HepG2 (cell line): ENCODE measurements at regions of chr21 and their contacts with region 1.

Region 1: GRCh38 chr21:43728467-43729390 is 9.8 kb downstream of the PDXK start:
- DNase-seq: peak; percentile 85
- ATAC-seq: peak; percentile 73
- H3K4me3 ChIP-seq: peak overlapping the region; percentile 75 to 96 (median 82)
- H3K27ac ChIP-seq: peak overlapping the region; percentile 93
- H3K4me1 ChIP-seq: peaks cover 69% of the 10 kb centered on the region
- H3K27me3 ChIP-seq: no peaks in the 10 kb centered on the region; a peak in 1 of 5 replicates
- CTCF ChIP-seq: peak; percentile 50
- EP300 ChIP-seq: no peak; a peak in 1 of 4 replicates
- POLR2A ChIP-seq: peak in 1 of 2 experiments; percentile 75; a peak in 2 of 4 replicates
- RAD21 ChIP-seq: peak; percentile 51

Region 2: DNA sequence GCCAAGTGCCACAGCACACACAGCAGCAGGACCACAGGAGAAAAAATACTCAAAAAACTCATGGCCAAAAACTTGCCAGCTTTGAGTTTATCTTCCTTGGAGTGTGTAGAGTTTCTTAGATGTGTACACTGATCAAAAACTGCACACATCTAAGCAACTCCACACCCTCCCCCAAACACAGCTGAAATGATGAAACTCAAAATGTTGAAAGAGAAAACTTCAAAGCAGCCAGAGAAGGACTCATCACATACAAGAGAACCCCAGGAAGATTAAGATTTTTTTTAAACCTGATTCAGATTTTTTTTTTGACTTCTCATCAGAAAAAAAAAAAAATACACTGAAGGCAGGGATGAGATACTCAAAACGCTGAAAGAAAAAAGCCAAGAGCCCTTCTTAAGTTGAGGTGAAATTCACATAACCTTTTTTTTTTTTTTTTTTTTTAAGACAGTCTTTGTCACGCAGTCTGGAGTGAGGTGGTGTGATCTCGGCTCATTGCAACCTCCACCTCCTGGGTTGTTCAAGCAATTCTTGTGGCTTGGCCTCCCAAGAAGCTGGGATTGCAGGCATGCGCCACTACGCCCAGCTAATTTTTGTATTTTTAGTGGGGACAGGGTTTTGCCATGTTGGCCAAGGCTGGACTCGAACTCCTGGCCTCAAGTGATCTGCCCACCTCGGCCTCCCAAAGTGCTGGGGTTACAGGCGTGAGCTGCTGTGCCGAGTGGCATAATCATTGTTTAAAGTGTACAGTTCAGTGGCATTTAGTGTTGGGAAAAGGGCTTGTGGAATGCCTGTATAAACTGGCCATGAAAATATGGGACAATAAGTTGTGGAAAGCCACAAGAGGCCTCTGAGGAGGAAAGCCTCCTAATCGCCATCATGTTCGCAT is 30.7 kb before region 1 on chr21:
- CTCF ChIA-PET with region 1: no interaction called
- POLR2A ChIA-PET with region 1: interaction called, 13 read pairs
- in situ Hi-C with region 1: no loop called
- intact Hi-C with region 1: no loop called
- DNase-seq: peak; percentile 57
- ATAC-seq: peak; percentile 26
- H3K4me3 ChIP-seq: peak overlapping the region in 1 of 3 experiments; percentile 28; a peak in 2 of 6 replicates
- H3K27ac ChIP-seq: peak overlapping the region; percentile 69
- H3K4me1 ChIP-seq: peaks cover 65% of the 10 kb centered on the region
- H3K27me3 ChIP-seq: no peaks in the 10 kb centered on the region
- CTCF ChIP-seq: no peak
- EP300 ChIP-seq: no peak
- POLR2A ChIP-seq: no peak
- RAD21 ChIP-seq: no peak

Region 3: GRCh38 chr21:43703035-43703880 is 25.5 kb before region 1 on chr21:
- CTCF ChIA-PET with region 1: no interaction called
- POLR2A ChIA-PET with region 1: interaction called, 13 read pairs
- in situ Hi-C with region 1: no loop called
- intact Hi-C with region 1: no loop called
- DNase-seq: peak; percentile 57
- ATAC-seq: peak; percentile 67
- H3K4me3 ChIP-seq: peak overlapping the region; percentile 40 to 63 (median 55)
- H3K27ac ChIP-seq: peak overlapping the region; percentile 66
- H3K4me1 ChIP-seq: peaks cover 82% of the 10 kb centered on the region
- H3K27me3 ChIP-seq: peaks cover 0 to 2% of the 10 kb centered on the region in 2 experiments; a peak in 2 of 5 replicates
- CTCF ChIP-seq: peak; percentile 33
- EP300 ChIP-seq: no peak
- POLR2A ChIP-seq: peak in 1 of 2 experiments; percentile 35; a peak in 1 of 4 replicates
- RAD21 ChIP-seq: no peak

Region 4: GRCh38 chr21:43712308-43712974 is 16.3 kb before region 1 on chr21:
- CTCF ChIA-PET with region 1: no interaction called
- POLR2A ChIA-PET with region 1: interaction called, 14 read pairs
- in situ Hi-C with region 1: no loop called
- intact Hi-C with region 1: no loop called
- DNase-seq: no peak
- ATAC-seq: peak; percentile 58
- H3K4me3 ChIP-seq: peak overlapping the region; percentile 37 to 65 (median 41)
- H3K27ac ChIP-seq: no peak overlapping the region
- H3K4me1 ChIP-seq: peaks cover 55% of the 10 kb centered on the region
- H3K27me3 ChIP-seq: peaks cover 3 to 11% of the 10 kb centered on the region in 2 experiments; a peak in 4 of 5 replicates
- CTCF ChIP-seq: no peak
- EP300 ChIP-seq: no peak
- POLR2A ChIP-seq: no peak
- RAD21 ChIP-seq: no peak

Region 5: GRCh38 chr21:43739621-43740435 is 11.1 kb after region 1 on chr21:
- CTCF ChIA-PET with region 1: no interaction called
- POLR2A ChIA-PET with region 1: interaction called, 27 read pairs
- in situ Hi-C with region 1: no loop called
- intact Hi-C with region 1: no loop called
- DNase-seq: no peak
- ATAC-seq: no peak; the same call in 1 of the 3 replicates
- H3K4me3 ChIP-seq: no peak overlapping the region
- H3K27ac ChIP-seq: no peak overlapping the region
- H3K4me1 ChIP-seq: peaks cover 34% of the 10 kb centered on the region
- H3K27me3 ChIP-seq: no peaks in the 10 kb centered on the region
- CTCF ChIP-seq: no peak
- EP300 ChIP-seq: no peak
- POLR2A ChIP-seq: no peak; a peak in 1 of 4 replicates
- RAD21 ChIP-seq: no peak

Region 6: GRCh38 chr21:43783101-43783700 is 54.5 kb after region 1 on chr21:
- CTCF ChIA-PET with region 1: no interaction called
- POLR2A ChIA-PET with region 1: interaction called, 18 read pairs
- in situ Hi-C with region 1: no loop called
- intact Hi-C with region 1: no loop called
- DNase-seq: peak; percentile 96
- ATAC-seq: peak; percentile 87
- H3K4me3 ChIP-seq: peak overlapping the region in 2 of 3 experiments; percentile 23 to 41; a peak in 3 of 6 replicates
- H3K27ac ChIP-seq: peak overlapping the region; percentile 76
- H3K4me1 ChIP-seq: peaks cover 66% of the 10 kb centered on the region
- H3K27me3 ChIP-seq: no peaks in the 10 kb centered on the region
- CTCF ChIP-seq: 0 out of 2 replicates have a peak, but pooled peaks have one; percentile 28
- EP300 ChIP-seq: peak; percentile 58 to 83; a peak in 3 of 4 replicates
- POLR2A ChIP-seq: 0 out of 4 replicates have a peak, but pooled peaks of 1 of the 2 experiments have one; percentile 31
- RAD21 ChIP-seq: no peak

Region 7: GRCh38 chr21:43789276-43790009 is 60.7 kb after region 1 on chr21 and contains the start of gene RRP1:
- CTCF ChIA-PET with region 1: no interaction called
- POLR2A ChIA-PET with region 1: interaction called, 21 read pairs
- in situ Hi-C with region 1: no loop called
- intact Hi-C with region 1: no loop called
- DNase-seq: peak; percentile 74
- ATAC-seq: peak; percentile 88
- H3K4me3 ChIP-seq: peak within 1 kb of the TSS; percentile 75 to 95 (median 86)
- H3K27ac ChIP-seq: peak within 1 kb of the TSS; percentile 71
- H3K4me1 ChIP-seq: peaks cover 16% of the 10 kb centered on the region
- H3K27me3 ChIP-seq: no peaks in the 10 kb centered on the region; a peak in 1 of 5 replicates
- CTCF ChIP-seq: peak; percentile 90
- EP300 ChIP-seq: 0 out of 4 replicates have a peak, but pooled peaks of 1 of the 2 experiments have one; percentile 6
- POLR2A ChIP-seq: peak in 1 of 2 experiments; percentile 77; a peak in 2 of 4 replicates
- RAD21 ChIP-seq: peak; percentile 73
- total RNA-seq, gene RRP1: 24.6 and 35.1 TPM in 2 replicates